K562 (cell line): ENCODE measurements at regions of chrX and their contacts with region 1.

Region 1: DNA sequence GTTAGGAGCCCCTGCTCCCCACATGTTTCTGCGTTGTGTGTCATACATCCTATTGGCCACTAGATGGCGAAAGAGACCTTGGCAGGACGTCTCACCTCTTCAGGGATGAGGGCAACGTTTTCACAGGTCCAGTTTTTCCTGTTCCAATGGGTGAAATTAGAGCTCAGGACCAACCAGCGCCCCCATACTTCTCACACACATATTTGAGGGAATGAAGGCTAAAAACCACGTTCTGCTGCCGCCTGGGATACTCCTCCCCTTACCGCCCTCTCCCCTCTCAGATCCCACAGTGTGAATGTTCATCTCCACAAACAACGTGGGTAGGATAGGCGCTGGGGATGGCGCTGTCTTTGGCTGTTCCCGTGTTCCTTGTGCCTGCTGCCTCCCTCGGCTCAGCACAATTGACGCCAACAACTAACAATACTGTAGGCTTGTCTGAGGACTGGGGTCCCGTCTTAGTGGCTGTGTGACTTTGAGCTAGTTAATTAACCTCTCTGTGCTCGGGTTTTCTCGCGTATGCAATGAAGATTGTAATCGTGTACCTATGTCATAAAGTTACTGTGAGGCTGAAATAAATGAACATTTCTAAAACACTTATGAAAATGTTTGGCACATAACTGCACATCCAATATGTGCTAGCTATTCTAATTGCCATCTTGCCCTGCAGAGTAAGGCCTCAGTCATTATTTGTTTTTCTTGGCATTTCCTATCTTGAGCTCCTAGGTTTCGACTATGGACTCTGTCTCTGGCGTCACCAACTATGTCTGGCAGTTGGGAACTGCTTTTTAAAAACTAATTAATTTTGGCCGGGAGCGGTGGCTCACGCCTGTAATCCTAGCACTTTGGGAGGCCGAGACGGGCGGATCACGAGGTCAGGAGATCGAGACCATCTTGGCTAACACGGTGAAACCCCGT is 181.3 kb upstream of the STK26 start:
- DNase-seq: peak; percentile 65 to 75 (median 67)
- ATAC-seq: peak; percentile 94
- H3K4me3 ChIP-seq: no peak overlapping the region
- H3K27ac ChIP-seq: no peak overlapping the region
- H3K4me1 ChIP-seq: peaks cover 5 to 19% of the 10 kb centered on the region in 2 experiments; a peak in 4 of 5 replicates
- H3K27me3 ChIP-seq: no peaks in the 10 kb centered on the region
- CTCF ChIP-seq: peak; percentile 79 to 84 (median 80)
- EP300 ChIP-seq: no peak
- POLR2A ChIP-seq: no peak
- RAD21 ChIP-seq: peak; percentile 79 to 86

Region 2: DNA sequence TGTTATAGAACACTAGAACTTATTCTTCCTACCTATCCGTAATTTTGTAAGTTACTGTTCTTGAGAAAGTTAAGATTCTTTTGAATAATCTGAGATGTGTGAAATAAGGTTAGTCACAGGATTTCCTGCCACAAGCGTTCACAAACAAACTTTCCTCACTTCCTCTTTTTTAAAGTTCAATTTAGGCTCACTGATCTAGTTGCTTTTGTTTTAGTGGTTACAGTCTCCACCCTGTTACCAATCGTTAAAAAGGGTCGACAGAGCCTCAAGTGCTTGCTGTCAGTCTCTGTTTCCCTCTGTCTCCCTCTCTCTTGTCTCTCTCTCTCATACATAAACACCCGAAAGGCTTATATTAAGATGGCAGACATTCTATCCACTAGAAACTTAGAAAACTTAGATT is 145.5 kb after region 1 on chrX:
- CTCF ChIA-PET with region 1: no interaction called
- POLR2A ChIA-PET with region 1: no interaction called
- in situ Hi-C with region 1: no loop called
- intact Hi-C with region 1: loop called (anchors 5 kb)
- DNase-seq: peak in 1 of 4 experiments; percentile 36
- ATAC-seq: peak; percentile 38
- H3K4me3 ChIP-seq: no peak overlapping the region
- H3K27ac ChIP-seq: peak overlapping the region; percentile 82
- H3K4me1 ChIP-seq: peaks cover 7 to 34% of the 10 kb centered on the region in 2 experiments; a peak in 4 of 5 replicates
- H3K27me3 ChIP-seq: no peaks in the 10 kb centered on the region
- CTCF ChIP-seq: no peak
- EP300 ChIP-seq: no peak
- POLR2A ChIP-seq: no peak
- RAD21 ChIP-seq: no peak

Region 3: GRCh38 chrX:132071260-132071659 is 229.5 kb after region 1 on chrX:
- CTCF ChIA-PET with region 1: interaction called, 8 read pairs
- POLR2A ChIA-PET with region 1: no interaction called
- in situ Hi-C with region 1: loop called (anchors 5 kb)
- intact Hi-C with region 1: loop called (anchors 5 kb)
- DNase-seq: peak in 3 of 4 experiments; percentile 7 to 14 (median 10)
- ATAC-seq: peak; percentile 64
- H3K4me3 ChIP-seq: no peak overlapping the region
- H3K27ac ChIP-seq: no peak overlapping the region
- H3K4me1 ChIP-seq: no peaks in the 10 kb centered on the region
- H3K27me3 ChIP-seq: no peaks in the 10 kb centered on the region
- CTCF ChIP-seq: peak in 2 of 3 experiments; percentile 22 to 52; a peak in 3 of 6 replicates
- EP300 ChIP-seq: no peak
- POLR2A ChIP-seq: no peak
- RAD21 ChIP-seq: peak; percentile 35 to 61

Region 4: DNA sequence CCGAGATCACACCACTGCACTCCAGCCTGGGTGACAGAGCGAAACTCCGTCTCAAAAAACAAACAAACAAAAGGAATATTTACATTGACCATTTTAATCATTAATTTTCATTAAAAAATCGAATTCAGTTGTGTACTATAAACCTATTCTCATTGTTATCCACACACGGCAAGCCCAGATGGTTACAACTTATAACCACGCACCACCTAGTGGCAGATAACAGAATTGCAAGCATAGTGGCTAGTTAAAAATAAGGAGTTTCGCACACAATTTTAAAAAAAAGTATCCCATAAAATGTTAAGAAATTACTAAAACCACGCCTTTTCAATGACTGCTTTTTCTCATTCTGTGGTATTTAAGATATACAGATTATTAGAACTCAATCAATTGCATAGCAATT is 621.7 kb after region 1 on chrX:
- CTCF ChIA-PET with region 1: no interaction called
- POLR2A ChIA-PET with region 1: no interaction called
- in situ Hi-C with region 1: loop called (anchors 25 kb)
- intact Hi-C with region 1: loop called (anchors 5 kb)
- DNase-seq: peak; percentile 17 to 45 (median 38)
- ATAC-seq: no peak
- H3K4me3 ChIP-seq: no peak overlapping the region
- H3K27ac ChIP-seq: no peak overlapping the region
- H3K4me1 ChIP-seq: no peaks in the 10 kb centered on the region
- H3K27me3 ChIP-seq: no peaks in the 10 kb centered on the region
- CTCF ChIP-seq: peak; percentile 38 to 59 (median 56); a peak in 5 of 6 replicates
- EP300 ChIP-seq: no peak
- POLR2A ChIP-seq: no peak
- RAD21 ChIP-seq: peak; percentile 35 to 49

Region 5: DNA sequence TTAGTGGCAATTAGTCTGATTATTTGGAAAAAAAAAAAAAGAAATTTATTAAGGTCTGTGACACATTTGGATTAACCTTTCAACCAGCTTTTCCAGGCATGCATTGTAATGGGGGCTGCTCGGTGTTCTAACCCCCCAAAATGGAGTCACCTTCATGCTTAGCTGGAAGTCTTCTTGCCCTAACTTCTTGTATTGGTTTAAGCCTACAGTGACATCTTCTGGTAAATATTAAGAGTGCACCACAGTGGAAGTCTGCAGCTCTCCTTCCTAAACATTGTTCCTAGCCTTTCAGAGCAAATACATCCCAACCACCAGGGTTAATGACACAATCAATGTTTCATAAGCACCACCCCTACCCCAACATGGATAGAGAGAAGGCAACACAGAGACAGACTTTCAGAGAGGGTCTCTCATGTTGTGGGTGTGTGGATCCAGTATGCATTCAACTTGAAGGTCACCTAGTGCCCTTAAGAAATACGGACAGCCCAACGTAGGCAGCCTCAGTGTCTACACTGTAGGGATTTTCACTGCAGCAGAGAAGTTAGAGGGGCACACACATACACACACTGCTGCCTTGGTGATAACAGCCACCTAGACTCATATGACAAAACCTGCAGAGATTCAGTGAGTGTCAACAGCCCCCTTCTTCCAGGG is 790.0 kb after region 1 on chrX:
- CTCF ChIA-PET with region 1: interaction called, 10 read pairs
- POLR2A ChIA-PET with region 1: no interaction called
- in situ Hi-C with region 1: loop called (anchors 10 kb)
- intact Hi-C with region 1: no loop called
- DNase-seq: peak; percentile 6 to 28 (median 11)
- ATAC-seq: peak; percentile 66; the same call in 2 of the 3 replicates
- H3K4me3 ChIP-seq: no peak overlapping the region
- H3K27ac ChIP-seq: no peak overlapping the region
- H3K4me1 ChIP-seq: no peaks in the 10 kb centered on the region
- H3K27me3 ChIP-seq: peaks cover 3 to 12% of the 10 kb centered on the region in 2 experiments; a peak in 3 of 5 replicates
- CTCF ChIP-seq: peak; percentile 27 to 62 (median 42); a peak in 5 of 6 replicates
- EP300 ChIP-seq: no peak
- POLR2A ChIP-seq: no peak
- RAD21 ChIP-seq: peak; percentile 61 to 64